ENCODE measurements at regions of chr18 and their contacts with region 1.

Region 1: GRCh38 chr18:63161761-63162195 is 157.8 kb downstream of the BCL2 start:
- DNase-seq: peak; percentile 90
- ATAC-seq: peak; percentile 79
- H3K4me3 Mint-ChIP-seq: peak overlapping the region; percentile 73
- H3K27ac Mint-ChIP-seq: peak overlapping the region; percentile 95
- H3K4me1 Mint-ChIP-seq: peaks cover 78% of the 10 kb centered on the region
- H3K27me3 Mint-ChIP-seq: no peaks in the 10 kb centered on the region

Region 2: DNA sequence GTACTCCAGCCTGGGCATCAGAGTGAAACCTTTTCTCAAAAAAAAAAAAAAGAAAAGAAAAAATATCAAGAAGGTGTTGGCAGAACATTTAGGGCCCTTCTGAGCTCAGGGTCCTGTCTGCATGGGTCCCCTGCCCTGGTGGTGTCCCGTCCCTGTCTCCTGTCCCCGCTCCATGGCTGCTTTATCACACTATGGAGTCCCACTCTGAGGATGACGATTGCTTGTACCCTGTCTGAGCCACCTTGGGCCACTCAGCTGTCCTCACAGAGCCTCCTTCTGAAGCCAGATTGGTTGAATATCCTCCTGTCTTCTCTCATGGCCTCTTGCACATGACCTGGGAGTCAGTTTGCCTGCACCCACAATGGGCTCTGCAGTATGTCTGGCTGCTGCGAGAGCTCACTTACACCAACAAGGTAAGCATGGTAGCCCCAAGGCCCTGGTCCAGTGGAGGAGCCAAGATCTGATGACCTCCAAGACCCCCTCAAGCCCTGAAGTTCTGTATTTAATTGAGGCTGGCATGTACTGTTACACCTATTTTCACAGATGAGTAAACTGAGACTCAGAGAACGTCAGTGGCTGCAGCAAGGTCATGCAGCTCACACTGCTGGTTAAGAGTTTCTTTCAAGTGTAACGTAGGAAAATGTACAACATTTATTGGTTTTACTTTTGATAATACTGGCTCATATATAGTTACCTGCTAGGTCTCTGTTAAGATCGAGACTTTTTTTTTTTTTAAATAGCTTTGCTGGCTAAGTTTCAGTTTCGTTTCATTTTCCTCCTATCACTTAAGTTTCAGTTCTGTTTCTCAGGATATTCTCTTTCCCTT is 655.9 kb before region 1 on chr18:
- CTCF ChIA-PET with region 1: no interaction called
- POLR2A ChIA-PET with region 1: no interaction called
- intact Hi-C with region 1: loop called in 1 of 2 experiments (anchors 5 kb)
- DNase-seq: peak; percentile 66
- ATAC-seq: peak; percentile 99
- H3K4me3 Mint-ChIP-seq: peak overlapping the region; percentile 60
- H3K27ac Mint-ChIP-seq: peak overlapping the region; percentile 98
- H3K4me1 Mint-ChIP-seq: peaks cover 26% of the 10 kb centered on the region
- H3K27me3 Mint-ChIP-seq: no peaks in the 10 kb centered on the region

Region 3: GRCh38 chr18:63180971-63181376 is 19.2 kb after region 1 on chr18:
- CTCF ChIA-PET with region 1: interaction called, 6 read pairs
- POLR2A ChIA-PET with region 1: no interaction called
- intact Hi-C with region 1: loop called (anchors 2 kb)
- DNase-seq: peak; percentile 56
- ATAC-seq: peak; percentile 83
- H3K4me3 Mint-ChIP-seq: no peak overlapping the region
- H3K27ac Mint-ChIP-seq: peak overlapping the region; percentile 53
- H3K4me1 Mint-ChIP-seq: peaks cover 59% of the 10 kb centered on the region
- H3K27me3 Mint-ChIP-seq: no peaks in the 10 kb centered on the region

Region 4: GRCh38 chr18:63216516-63217311 is 54.9 kb after region 1 on chr18:
- CTCF ChIA-PET with region 1: interaction called, 10 read pairs
- POLR2A ChIA-PET with region 1: interaction called, 9 read pairs
- intact Hi-C with region 1: loop called (anchors 1 kb)
- DNase-seq: peak; percentile 56
- ATAC-seq: peak; percentile 28
- H3K4me3 Mint-ChIP-seq: peak overlapping the region; percentile 34
- H3K27ac Mint-ChIP-seq: peak overlapping the region; percentile 91
- H3K4me1 Mint-ChIP-seq: peaks cover 95% of the 10 kb centered on the region
- H3K27me3 Mint-ChIP-seq: no peaks in the 10 kb centered on the region

Region 5: GRCh38 chr18:63299837-63300745 is 138.3 kb after region 1 on chr18:
- CTCF ChIA-PET with region 1: interaction called, 3 read pairs
- POLR2A ChIA-PET with region 1: no interaction called
- intact Hi-C with region 1: loop called (anchors 1 kb)
- DNase-seq: peak; percentile 69
- ATAC-seq: peak; percentile 71
- H3K4me3 Mint-ChIP-seq: peak overlapping the region; percentile 43
- H3K27ac Mint-ChIP-seq: peak overlapping the region; percentile 90
- H3K4me1 Mint-ChIP-seq: peaks cover 75% of the 10 kb centered on the region
- H3K27me3 Mint-ChIP-seq: no peaks in the 10 kb centered on the region

Region 6: GRCh38 chr18:63422087-63422809 is 260.5 kb after region 1 on chr18 and contains the start of gene VPS4B:
- CTCF ChIA-PET with region 1: no interaction called
- POLR2A ChIA-PET with region 1: no interaction called
- intact Hi-C with region 1: loop called in 1 of 2 experiments (anchors 1 kb)
- DNase-seq: peak; percentile 100
- ATAC-seq: peak; percentile 95
- H3K4me3 Mint-ChIP-seq: peak within 1 kb of the TSS; percentile 99
- H3K27ac Mint-ChIP-seq: peak within 1 kb of the TSS; percentile 95
- H3K4me1 Mint-ChIP-seq: peaks cover 30% of the 10 kb centered on the region
- H3K27me3 Mint-ChIP-seq: no peaks in the 10 kb centered on the region
- total RNA-seq, gene VPS4B: 40.7 to 48.4 TPM

Measured in activated CD4-positive, alpha-beta T cell treated with anti-CD3 and anti-CD28 coated beads for 36 hours (primary cell).